HCT116 (cell line): ENCODE measurements at regions of chr10 and their contacts with region 1.

Region 1: DNA sequence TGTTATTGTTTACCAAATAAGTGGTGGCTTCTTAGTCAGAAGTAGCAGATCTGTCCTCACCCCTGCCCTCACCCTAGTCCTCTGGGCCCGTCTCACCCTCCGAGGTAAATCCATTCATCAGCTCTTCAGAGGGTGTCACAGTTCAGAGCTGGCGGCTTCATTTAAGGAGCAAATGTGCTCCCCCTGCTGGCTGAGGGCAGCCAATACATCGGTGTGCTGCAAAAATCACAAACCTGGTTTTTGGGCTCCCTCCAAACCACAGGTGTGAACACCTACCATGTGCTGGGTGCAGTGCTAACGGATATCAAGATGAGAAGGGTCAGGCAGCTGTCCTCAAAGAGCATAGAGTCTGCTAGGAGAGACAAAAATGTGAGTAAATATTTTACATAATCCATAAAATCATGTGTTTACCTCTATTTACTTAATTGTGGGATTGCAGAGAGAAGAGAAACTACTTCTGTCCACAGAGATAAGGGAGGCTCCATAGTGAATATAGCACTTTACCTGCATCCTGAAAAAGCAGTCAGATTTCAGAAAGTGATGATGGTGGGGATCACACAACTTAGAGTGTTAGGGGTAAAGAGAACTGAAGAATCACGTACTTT is 15.5 kb upstream of the CRTAC1 start:
- DNase-seq: peak; percentile 60
- ATAC-seq: peak; percentile 84
- H3K4me3 ChIP-seq: no peak overlapping the region
- H3K27ac ChIP-seq: no peak overlapping the region
- H3K4me1 ChIP-seq: peaks cover 0 to 7% of the 10 kb centered on the region in 2 experiments; a peak in 1 of 4 replicates
- H3K27me3 ChIP-seq: peaks cover 29% of the 10 kb centered on the region
- CTCF ChIP-seq: peak; percentile 56 to 89 (median 85); a peak in 5 of 6 replicates
- POLR2A ChIP-seq: no peak
- RAD21 ChIP-seq: peak; percentile 63

Region 2: DNA sequence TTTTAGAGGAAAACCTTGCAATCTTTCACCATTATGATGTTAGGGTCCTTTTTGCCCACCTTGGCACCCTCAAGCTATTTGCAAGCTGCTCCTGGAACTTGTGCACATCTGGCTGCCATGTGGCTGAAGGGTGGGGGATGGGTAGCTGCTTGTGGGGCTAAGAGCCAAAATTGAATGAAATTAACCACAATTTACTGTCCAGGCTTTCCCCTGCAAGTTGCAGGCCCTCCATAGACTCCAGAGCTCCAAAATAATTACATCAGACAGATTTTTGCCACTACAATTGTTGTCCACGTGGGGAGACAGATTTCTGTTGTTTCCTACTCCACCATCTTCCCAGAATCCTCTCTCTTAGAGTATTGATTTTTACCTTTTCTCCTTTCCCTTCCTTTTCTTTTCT is 386.3 kb before region 1 on chr10:
- CTCF ChIA-PET with region 1: no interaction called
- POLR2A ChIA-PET with region 1: no interaction called
- RAD21 ChIA-PET with region 1: no interaction called
- intact Hi-C with region 1: no loop called
- DNase-seq: no peak
- ATAC-seq: no peak
- H3K4me3 ChIP-seq: no peak overlapping the region
- H3K27ac ChIP-seq: no peak overlapping the region
- H3K4me1 ChIP-seq: no peaks in the 10 kb centered on the region
- H3K27me3 ChIP-seq: no peaks in the 10 kb centered on the region
- CTCF ChIP-seq: no peak
- POLR2A ChIP-seq: no peak
- RAD21 ChIP-seq: no peak

Region 3: DNA sequence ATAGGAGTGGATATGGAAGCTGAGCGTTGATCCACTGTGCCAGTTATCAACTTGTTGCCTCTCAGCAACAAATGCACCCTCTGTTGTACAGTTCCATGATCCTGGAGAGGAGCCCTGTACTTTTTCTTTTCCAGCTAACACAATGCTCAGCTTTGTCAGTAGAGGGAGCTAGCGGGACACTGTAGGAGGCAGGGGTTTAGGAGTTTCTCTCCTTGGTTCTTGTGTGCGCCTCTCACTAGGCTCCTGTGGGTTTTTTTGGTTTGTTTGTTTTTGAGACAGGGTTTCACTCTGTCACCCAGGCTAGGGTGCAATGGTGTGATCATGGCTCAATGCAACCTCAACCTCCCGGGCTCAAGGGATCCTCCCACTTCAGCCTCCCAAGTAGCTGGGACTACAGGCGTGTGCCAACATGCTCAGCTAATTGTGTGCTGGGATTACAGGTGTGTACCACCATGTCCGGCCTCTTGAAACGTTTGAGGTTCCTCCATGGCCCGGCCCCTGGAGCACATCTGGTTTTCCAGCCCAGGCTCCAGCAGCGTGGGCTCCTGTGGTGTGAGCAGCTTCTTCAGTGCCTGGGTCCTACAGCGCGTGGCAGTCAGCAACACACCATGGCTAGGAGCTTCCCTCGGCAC is 344.3 kb before region 1 on chr10:
- CTCF ChIA-PET with region 1: interaction called, 10 read pairs
- POLR2A ChIA-PET with region 1: no interaction called
- RAD21 ChIA-PET with region 1: no interaction called
- intact Hi-C with region 1: no loop called
- DNase-seq: no peak
- ATAC-seq: peak; percentile 98
- H3K4me3 ChIP-seq: no peak overlapping the region
- H3K27ac ChIP-seq: no peak overlapping the region; the same call in 1 of the 2 replicates
- H3K4me1 ChIP-seq: peaks cover 0 to 12% of the 10 kb centered on the region in 2 experiments; a peak in 2 of 4 replicates
- H3K27me3 ChIP-seq: no peaks in the 10 kb centered on the region
- CTCF ChIP-seq: peak; percentile 93 to 95 (median 93)
- POLR2A ChIP-seq: no peak
- RAD21 ChIP-seq: peak; percentile 92

Region 4: DNA sequence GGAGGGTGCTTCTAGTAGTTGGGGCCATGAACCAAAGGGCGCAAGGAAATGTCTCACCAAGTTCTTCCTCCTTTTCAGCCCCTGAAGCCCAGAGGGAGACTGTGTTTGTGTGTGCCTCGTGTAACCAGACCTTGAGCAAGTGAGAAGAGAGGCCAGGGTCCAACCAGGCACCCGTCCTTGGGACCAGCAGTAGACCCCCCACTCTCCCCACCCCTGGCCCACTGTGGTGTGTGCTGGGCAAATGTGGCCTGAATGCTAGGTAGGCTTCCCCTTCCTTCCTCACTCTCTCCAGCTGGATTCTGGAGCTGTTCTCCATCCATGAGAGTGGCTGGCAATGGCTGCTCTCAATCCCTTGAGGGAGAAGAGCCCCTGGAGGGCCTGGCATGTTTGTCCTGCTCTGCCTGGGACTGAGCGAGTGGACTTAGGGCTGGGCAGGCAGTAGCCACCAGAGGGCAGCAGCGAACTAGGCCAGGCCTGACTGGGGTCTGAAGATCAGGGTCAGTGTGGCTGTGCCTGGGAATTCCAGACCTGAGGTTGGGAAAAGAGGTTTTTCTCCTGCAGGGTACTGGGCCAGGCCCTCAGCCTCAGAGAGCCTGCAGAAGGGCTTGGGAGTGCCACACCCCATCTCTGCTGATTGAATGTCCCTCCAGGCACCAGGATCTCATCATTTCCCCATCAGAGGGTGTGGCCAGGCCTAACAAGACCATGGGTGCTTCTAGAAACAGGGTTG is 286.6 kb before region 1 on chr10:
- CTCF ChIA-PET with region 1: interaction called, 11 read pairs
- POLR2A ChIA-PET with region 1: no interaction called
- RAD21 ChIA-PET with region 1: no interaction called
- intact Hi-C with region 1: loop called (anchors 2 kb)
- DNase-seq: peak; percentile 48
- ATAC-seq: peak; percentile 94
- H3K4me3 ChIP-seq: no peak overlapping the region
- H3K27ac ChIP-seq: no peak overlapping the region
- H3K4me1 ChIP-seq: peaks cover 2% of the 10 kb centered on the region in 2 experiments; a peak in 3 of 4 replicates
- H3K27me3 ChIP-seq: no peaks in the 10 kb centered on the region
- CTCF ChIP-seq: peak; percentile 79 to 98 (median 94)
- POLR2A ChIP-seq: no peak
- RAD21 ChIP-seq: peak; percentile 86

Region 5: GRCh38 chr10:97792141-97792721 is 253.7 kb before region 1 on chr10:
- CTCF ChIA-PET with region 1: interaction called, 16 read pairs
- POLR2A ChIA-PET with region 1: no interaction called
- RAD21 ChIA-PET with region 1: no interaction called
- intact Hi-C with region 1: no loop called
- DNase-seq: peak; percentile 38
- ATAC-seq: no peak; the same call in 1 of the 2 replicates
- H3K4me3 ChIP-seq: no peak overlapping the region
- H3K27ac ChIP-seq: no peak overlapping the region
- H3K4me1 ChIP-seq: no peaks in the 10 kb centered on the region
- H3K27me3 ChIP-seq: no peaks in the 10 kb centered on the region
- CTCF ChIP-seq: peak; percentile 94 to 96 (median 94)
- POLR2A ChIP-seq: no peak
- RAD21 ChIP-seq: peak; percentile 98

Region 6: DNA sequence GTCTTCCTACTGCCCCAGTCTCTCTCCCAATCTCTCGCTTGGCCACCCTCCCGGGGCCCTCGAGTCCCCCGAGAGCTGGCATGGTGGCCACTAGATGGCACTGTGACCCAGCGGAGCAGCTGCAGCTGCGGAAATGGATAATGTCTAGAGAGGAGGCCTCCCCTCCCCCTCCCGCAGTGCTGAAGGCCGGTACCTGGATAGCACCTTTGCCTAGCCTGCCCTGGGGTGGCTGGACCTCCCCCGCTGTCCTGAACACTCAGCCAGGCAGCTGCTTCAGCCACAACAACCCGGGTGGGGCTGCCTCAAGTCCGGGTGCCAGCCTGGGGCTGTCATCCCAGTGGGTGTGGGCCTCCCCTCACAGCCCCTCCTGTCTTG is 131.1 kb before region 1 on chr10:
- CTCF ChIA-PET with region 1: interaction called, 76 read pairs
- POLR2A ChIA-PET with region 1: no interaction called
- RAD21 ChIA-PET with region 1: interaction called, 11 to 13 read pairs
- intact Hi-C with region 1: loop called (anchors 1 kb)
- DNase-seq: peak; percentile 58
- ATAC-seq: peak; percentile 98
- H3K4me3 ChIP-seq: no peak overlapping the region
- H3K27ac ChIP-seq: no peak overlapping the region; the same call in 1 of the 2 replicates
- H3K4me1 ChIP-seq: peaks cover 3 to 9% of the 10 kb centered on the region in 2 experiments; a peak in 3 of 4 replicates
- H3K27me3 ChIP-seq: peaks cover 5% of the 10 kb centered on the region; the same call in 1 of the 2 replicates
- CTCF ChIP-seq: peak; percentile 92 to 97 (median 96)
- POLR2A ChIP-seq: no peak
- RAD21 ChIP-seq: peak; percentile 99

Region 7: GRCh38 chr10:98019784-98020183 is 26.1 kb before region 1 on chr10:
- CTCF ChIA-PET with region 1: interaction called, 10 read pairs
- POLR2A ChIA-PET with region 1: no interaction called
- RAD21 ChIA-PET with region 1: no interaction called
- intact Hi-C with region 1: no loop called
- DNase-seq: no peak
- ATAC-seq: no peak
- H3K4me3 ChIP-seq: no peak overlapping the region
- H3K27ac ChIP-seq: no peak overlapping the region
- H3K4me1 ChIP-seq: no peaks in the 10 kb centered on the region
- H3K27me3 ChIP-seq: peaks cover 44% of the 10 kb centered on the region
- CTCF ChIP-seq: no peak
- POLR2A ChIP-seq: no peak
- RAD21 ChIP-seq: no peak

Region 8: DNA sequence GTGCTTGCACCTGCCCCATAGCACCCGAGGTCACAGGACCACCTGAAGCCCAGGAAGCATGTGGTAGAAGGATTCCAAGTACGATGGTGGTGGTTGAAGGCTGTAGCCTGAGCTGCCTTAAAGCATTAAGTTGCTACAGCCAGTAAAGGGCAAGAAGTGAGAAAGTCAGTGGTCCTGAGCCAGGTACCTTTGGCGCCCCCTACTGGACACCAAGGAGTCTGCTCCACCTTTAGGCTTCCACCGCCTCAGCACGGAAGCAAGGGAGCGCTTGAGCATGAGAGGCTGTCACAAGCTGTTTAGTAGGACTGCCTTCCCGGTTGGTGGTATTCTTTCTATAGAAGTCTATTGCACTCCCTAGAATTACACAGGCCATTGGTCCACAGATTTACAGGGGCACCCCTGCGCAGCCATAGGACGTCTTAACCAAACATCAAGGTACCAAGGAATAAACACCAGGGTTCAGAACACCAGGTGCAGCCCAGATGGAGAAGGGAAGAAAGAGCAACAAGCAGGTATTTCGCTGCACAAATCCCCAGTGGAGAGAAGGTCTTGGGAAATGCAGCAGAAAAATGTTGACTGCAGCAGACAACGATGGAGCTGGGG is 17.6 kb before region 1 on chr10:
- CTCF ChIA-PET with region 1: interaction called, 34 read pairs
- POLR2A ChIA-PET with region 1: no interaction called
- RAD21 ChIA-PET with region 1: interaction called in 1 of 2 experiments, 5 read pairs
- intact Hi-C with region 1: no loop called
- DNase-seq: peak; percentile 37
- ATAC-seq: peak; percentile 95
- H3K4me3 ChIP-seq: no peak overlapping the region
- H3K27ac ChIP-seq: no peak overlapping the region
- H3K4me1 ChIP-seq: no peaks in the 10 kb centered on the region
- H3K27me3 ChIP-seq: peaks cover 33% of the 10 kb centered on the region
- CTCF ChIP-seq: peak; percentile 78 to 98 (median 96)
- POLR2A ChIP-seq: no peak
- RAD21 ChIP-seq: peak; percentile 73

Region 9: GRCh38 chr10:98115031-98115787 is 69.3 kb after region 1 on chr10:
- CTCF ChIA-PET with region 1: no interaction called
- POLR2A ChIA-PET with region 1: no interaction called
- RAD21 ChIA-PET with region 1: no interaction called
- intact Hi-C with region 1: no loop called
- DNase-seq: no peak
- ATAC-seq: no peak
- H3K4me3 ChIP-seq: no peak overlapping the region
- H3K27ac ChIP-seq: no peak overlapping the region
- H3K4me1 ChIP-seq: no peaks in the 10 kb centered on the region
- H3K27me3 ChIP-seq: peaks cover 77% of the 10 kb centered on the region
- CTCF ChIP-seq: no peak
- POLR2A ChIP-seq: no peak
- RAD21 ChIP-seq: no peak